Activated CD4-positive, alpha-beta memory T cell treated with anti-CD3 and anti-CD28 coated beads for 36 hours (primary cell): ENCODE measurements at regions of chr16 and their contacts with region 1.

Region 1: DNA sequence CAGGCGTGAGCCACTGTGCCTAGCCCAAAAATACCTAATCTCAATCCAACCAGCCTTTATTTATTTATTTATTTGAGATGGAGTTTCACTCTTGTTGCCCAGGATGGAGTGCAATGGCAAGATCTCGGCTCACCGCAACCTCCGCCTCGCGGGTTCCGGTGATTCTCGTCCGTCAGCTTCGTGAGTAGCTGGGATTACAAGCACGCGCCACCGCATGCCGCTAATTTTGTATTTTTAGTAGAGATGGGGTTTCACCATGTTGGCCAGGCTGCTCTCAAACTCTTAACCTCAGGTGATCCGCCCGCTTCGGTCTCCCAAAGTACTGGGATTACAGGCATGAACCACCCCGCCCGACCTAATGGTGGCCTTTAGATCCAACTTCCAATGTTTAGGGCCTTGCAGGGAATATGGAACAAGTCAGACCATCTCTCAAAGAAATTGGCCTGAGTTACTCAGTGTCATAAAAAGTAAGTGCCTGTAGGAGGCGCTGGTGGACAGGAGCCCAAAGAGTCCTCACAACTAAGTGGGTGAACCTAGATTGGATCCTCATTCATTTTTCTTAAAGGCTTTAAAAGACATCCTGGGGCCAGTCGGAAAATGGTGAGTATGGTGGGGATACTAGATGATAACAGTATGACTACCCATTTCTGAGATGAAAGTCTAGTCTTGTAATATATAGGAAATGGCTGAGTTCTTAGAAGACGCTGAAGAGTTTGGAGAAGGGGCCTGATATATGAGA is 4.6 kb downstream of the ZSCAN10 start:
- DNase-seq: peak; percentile 75
- H3K4me3 Mint-ChIP-seq: peak overlapping the region; percentile 25
- H3K27ac Mint-ChIP-seq: peak overlapping the region; percentile 90
- H3K4me1 Mint-ChIP-seq: peaks cover 27% of the 10 kb centered on the region
- H3K27me3 Mint-ChIP-seq: no peaks in the 10 kb centered on the region

Region 2: GRCh38 chr16:3074860-3075522 is 19.5 kb before region 1 on chr16:
- CTCF ChIA-PET with region 1: interaction called, 6 read pairs
- POLR2A ChIA-PET with region 1: interaction called, 5 read pairs
- intact Hi-C with region 1: loop called (anchors 1 kb)
- DNase-seq: peak; percentile 94
- H3K4me3 Mint-ChIP-seq: peak overlapping the region; percentile 78
- H3K27ac Mint-ChIP-seq: peak overlapping the region; percentile 99
- H3K4me1 Mint-ChIP-seq: peaks cover 89% of the 10 kb centered on the region
- H3K27me3 Mint-ChIP-seq: no peaks in the 10 kb centered on the region

Region 3: GRCh38 chr16:3106205-3106928 is 11.9 kb after region 1 on chr16:
- CTCF ChIA-PET with region 1: interaction called, 11 read pairs
- POLR2A ChIA-PET with region 1: interaction called, 3 read pairs
- intact Hi-C with region 1: no loop called
- DNase-seq: peak; percentile 95
- H3K4me3 Mint-ChIP-seq: peak overlapping the region; percentile 78
- H3K27ac Mint-ChIP-seq: peak overlapping the region; percentile 87
- H3K4me1 Mint-ChIP-seq: peaks cover 25% of the 10 kb centered on the region
- H3K27me3 Mint-ChIP-seq: no peaks in the 10 kb centered on the region

Region 4: DNA sequence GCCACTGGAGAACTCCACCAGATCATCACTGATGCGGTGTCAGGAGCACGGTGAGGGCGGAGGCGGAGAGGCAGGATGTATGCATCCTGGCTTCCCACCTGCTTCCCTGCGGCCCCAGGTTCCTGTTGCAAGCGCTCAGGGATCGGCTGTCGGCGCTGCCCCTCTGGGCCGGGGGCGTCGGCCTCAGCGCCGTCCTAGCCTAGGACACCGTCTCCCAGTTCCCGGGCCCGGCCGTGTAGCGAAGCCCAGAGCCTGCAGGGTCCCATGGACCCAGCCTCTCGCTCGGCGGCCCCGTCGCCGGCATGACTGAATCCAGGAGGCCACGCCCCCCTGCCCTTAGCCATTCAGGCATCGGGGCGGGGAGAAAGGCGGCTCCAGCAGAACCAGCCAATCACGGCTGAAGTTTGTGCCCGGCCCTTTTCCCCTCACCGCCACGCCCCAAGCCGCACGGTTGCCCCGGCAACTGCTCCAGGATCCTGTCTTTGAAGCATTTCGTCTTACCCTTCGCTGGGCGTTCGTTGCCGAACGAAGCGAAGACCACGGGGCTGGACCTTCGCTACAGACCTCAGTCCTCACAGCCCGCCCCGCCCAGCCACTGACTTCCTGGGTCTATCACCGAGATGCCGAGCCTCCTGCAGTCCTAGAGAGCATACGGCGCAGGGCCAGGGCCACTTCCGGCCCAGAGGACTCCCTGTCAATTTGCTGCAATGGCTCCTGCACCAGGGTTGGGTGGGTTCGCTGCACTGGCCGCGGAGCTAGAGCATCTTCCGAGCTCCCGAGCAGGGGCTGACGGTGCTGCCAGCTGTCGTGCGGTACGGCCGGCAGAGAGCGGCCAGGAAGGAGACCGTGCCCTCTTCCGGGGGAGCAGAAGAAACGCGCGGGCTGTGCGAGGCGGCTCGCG is 29.8 kb after region 1 on chr16:
- CTCF ChIA-PET with region 1: interaction called, 266 read pairs
- POLR2A ChIA-PET with region 1: interaction called, 5 read pairs
- intact Hi-C with region 1: loop called (anchors 1 kb)
- DNase-seq: peak; percentile 98
- H3K4me3 Mint-ChIP-seq: peak overlapping the region; percentile 98
- H3K27ac Mint-ChIP-seq: peak overlapping the region; percentile 95
- H3K4me1 Mint-ChIP-seq: peaks cover 21% of the 10 kb centered on the region
- H3K27me3 Mint-ChIP-seq: no peaks in the 10 kb centered on the region

Region 5: DNA sequence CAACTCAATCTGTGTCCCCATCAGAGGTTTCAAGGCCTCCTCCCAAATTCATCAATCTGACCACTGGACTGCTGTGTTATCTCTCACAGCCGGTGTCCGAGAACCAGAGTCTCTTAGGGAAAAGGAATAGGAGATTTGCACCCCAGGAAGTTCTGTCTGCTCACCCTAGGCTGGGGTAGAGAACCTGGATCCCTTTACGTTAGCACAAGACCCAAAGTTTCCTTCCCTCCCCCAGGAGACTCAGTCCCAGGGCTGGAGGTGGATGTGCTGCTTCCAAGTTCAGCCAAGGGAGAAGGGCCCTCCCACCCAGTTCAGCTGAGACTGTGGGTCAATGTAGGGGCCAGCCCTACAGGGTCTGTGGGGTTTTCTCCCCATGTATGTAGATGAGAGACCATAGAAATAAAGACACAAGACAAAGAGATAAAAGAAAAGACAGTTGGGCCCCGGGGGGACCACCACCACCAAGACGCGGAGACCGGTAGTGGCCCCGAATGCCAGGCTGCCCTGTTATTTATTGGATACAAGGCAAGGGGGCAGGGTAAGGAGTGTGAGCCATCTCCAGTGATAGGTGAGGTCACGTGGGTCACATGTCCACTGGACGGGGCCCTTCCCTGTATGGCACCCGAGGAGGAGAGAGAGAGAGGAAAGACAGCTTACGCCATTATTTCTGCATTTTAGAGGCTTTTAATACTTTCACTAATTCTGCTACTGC is 70.8 kb after region 1 on chr16:
- CTCF ChIA-PET with region 1: interaction called, 10 read pairs
- POLR2A ChIA-PET with region 1: no interaction called
- intact Hi-C with region 1: loop called (anchors 2 kb)
- DNase-seq: no peak
- H3K4me3 Mint-ChIP-seq: no peak overlapping the region
- H3K27ac Mint-ChIP-seq: peak overlapping the region; percentile 18
- H3K4me1 Mint-ChIP-seq: peaks cover 13% of the 10 kb centered on the region
- H3K27me3 Mint-ChIP-seq: no peaks in the 10 kb centered on the region

Region 6: GRCh38 chr16:3173892-3174617 is 79.6 kb after region 1 on chr16:
- CTCF ChIA-PET with region 1: interaction called, 10 read pairs
- POLR2A ChIA-PET with region 1: no interaction called
- intact Hi-C with region 1: no loop called
- DNase-seq: peak; percentile 57
- H3K4me3 Mint-ChIP-seq: peak overlapping the region; percentile 71
- H3K27ac Mint-ChIP-seq: peak overlapping the region; percentile 19
- H3K4me1 Mint-ChIP-seq: peaks cover 34% of the 10 kb centered on the region
- H3K27me3 Mint-ChIP-seq: peaks cover 51% of the 10 kb centered on the region

Region 7: DNA sequence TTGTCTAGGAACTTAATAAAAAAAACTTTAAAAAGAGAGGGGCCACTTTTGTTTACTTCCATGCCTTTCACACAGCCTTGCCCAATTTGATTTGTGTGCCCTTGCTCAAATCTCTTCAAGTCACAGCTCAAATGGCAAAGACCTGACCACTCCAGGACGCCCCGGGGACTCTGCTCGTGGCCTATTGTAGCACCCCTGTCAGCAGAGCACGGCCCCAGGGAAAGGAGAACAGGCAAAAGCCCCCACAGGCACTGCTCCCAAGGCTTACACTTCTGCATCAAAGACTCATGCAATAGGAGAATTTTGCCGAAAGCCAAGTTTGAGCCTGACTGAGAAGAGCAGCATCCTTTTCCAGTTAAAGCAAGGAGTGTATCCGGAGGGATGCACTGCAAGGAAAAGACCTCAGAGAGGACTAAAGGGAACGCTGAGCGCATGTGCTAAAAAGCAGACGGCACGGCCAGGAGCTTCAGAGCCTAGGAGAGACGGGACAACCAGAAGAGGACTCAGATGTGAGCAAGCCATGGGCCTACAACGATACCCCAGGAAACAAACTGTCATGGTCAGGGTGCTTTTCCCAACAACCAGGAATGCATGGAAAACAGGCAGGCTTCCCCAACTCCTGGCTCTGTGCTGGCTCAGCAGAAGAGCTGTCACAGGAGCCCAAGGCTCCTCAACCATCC is 777.9 kb after region 1 on chr16:
- CTCF ChIA-PET with region 1: no interaction called
- POLR2A ChIA-PET with region 1: no interaction called
- intact Hi-C with region 1: no loop called
- DNase-seq: no peak
- H3K4me3 Mint-ChIP-seq: no peak overlapping the region
- H3K27ac Mint-ChIP-seq: no peak overlapping the region
- H3K4me1 Mint-ChIP-seq: peaks cover 89% of the 10 kb centered on the region
- H3K27me3 Mint-ChIP-seq: no peaks in the 10 kb centered on the region